GM18951 (cell line): ENCODE measurements at regions of chr16 and their contacts with region 1.

Region 1: GRCh38 chr16:69565671-69566239 is at the start of gene NFAT5:
- POLR2A ChIP-seq: peak; percentile 76

Region 2: DNA sequence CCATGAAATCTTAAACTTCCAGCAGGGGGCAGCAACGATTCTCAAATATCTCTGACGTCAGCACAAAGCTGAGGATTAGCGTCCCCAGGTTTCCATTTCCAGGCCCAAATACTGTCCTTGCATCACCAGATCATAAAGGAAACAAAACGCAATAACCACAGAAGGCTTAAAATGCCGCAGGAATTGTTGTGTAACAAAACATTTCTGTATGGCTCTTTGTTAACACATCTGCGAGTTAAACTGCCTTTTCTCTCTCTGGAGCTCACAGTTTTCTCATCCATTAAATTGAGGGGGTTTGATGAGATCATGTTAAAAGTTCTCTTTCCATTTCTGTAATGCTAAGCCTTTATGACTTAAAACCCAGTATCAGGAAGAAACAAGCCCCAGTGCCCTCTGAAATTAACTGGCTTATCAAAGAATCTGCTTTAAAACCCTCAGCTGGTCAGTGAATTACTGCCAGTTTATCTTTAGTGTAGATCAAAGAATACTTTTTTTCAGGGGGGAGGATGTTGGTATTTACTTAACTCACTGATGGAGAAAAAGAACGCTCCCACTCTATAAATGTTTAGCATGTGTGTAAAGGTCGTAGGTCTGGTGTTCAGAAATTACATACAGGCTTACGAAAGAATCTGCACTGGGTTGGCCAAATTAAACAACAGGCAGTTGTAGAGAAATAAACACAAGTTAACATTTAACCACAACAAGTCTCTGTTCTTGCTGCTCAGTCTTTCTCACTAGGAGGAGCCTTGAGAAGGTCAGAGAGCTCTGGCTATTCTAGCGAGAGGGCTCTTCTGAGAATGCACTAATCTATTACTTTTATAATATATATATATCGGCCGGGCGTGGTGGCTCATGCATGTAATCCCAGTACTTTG is 169.3 kb before region 1 on chr16:
- in situ Hi-C with region 1: loop called (anchors 10 kb)
- POLR2A ChIP-seq: no peak

Region 3: DNA sequence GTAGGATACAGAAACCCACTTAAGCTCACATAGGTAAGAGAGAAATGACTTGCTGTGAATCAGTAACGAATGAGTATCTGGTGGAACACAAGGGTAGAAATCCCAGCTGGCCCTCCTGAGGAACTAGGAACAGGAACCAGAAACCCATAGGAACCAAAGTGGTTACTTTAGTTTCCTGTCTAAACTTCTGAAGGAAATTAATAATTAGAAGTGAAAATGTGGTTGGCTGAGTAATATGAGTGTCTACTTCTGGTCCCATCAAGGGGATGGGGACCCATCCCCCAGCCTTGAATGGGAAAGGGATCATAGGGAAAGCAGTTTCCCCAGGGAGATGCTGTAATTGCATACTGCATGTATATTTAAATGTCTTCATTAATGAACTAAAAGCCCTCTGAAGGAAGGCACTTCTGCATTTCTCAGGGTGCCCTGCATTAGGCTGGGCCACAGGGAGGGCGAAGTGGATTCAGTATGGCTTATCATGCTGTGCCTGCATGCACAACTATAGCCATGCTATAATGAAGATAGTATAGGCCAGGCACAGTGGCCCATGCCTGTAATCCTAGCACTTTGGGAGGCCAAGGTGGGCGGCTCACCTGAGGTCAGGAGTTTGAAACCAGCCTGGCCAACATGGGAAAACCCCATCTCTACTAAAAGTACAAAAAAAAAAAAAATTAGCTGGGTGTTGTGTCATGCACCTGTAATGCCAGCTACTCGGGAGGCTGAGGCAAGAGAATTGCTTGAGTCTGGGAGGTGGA is 95.8 kb before region 1 on chr16:
- in situ Hi-C with region 1: loop called (anchors 10 kb)
- POLR2A ChIP-seq: no peak

Region 4: GRCh38 chr16:69632836-69633235 is 67.1 kb after region 1 on chr16:
- in situ Hi-C with region 1: no loop called
- POLR2A ChIP-seq: no peak